ENCODE measurements at regions of chr2 and their contacts with region 1.

Region 1: GRCh38 chr2:75608684-75609333 is 37.8 kb upstream of the MRPL19 start:
- DNase-seq: peak; percentile 53 to 78
- ATAC-seq: peak; percentile 79 to 92
- H3K4me3 ChIP-seq: peak overlapping the region; percentile 36
- H3K27ac ChIP-seq: peak overlapping the region; percentile 49 to 76; a peak in 4 of 6 replicates
- H3K4me1 ChIP-seq: peaks cover 37% of the 10 kb centered on the region
- CTCF ChIP-seq: peak; percentile 98
- EP300 ChIP-seq: no peak
- POLR2A ChIP-seq: no peak
- RAD21 ChIP-seq: peak; percentile 87 to 97

Region 2: GRCh38 chr2:74919827-74920226 is 689.0 kb before region 1 on chr2:
- CTCF ChIA-PET with region 1: interaction called, 11 read pairs
- POLR2A ChIA-PET with region 1: interaction called, 4 read pairs
- DNase-seq: peak; percentile 69 to 82
- ATAC-seq: peak; percentile 73 to 88
- H3K4me3 ChIP-seq: peak overlapping the region; percentile 53
- H3K27ac ChIP-seq: peak overlapping the region; percentile 12 to 66; a peak in 3 of 6 replicates
- H3K4me1 ChIP-seq: peaks cover 6% of the 10 kb centered on the region
- CTCF ChIP-seq: peak; percentile 98
- EP300 ChIP-seq: no peak
- POLR2A ChIP-seq: no peak
- RAD21 ChIP-seq: peak; percentile 96 to 99

Region 3: DNA sequence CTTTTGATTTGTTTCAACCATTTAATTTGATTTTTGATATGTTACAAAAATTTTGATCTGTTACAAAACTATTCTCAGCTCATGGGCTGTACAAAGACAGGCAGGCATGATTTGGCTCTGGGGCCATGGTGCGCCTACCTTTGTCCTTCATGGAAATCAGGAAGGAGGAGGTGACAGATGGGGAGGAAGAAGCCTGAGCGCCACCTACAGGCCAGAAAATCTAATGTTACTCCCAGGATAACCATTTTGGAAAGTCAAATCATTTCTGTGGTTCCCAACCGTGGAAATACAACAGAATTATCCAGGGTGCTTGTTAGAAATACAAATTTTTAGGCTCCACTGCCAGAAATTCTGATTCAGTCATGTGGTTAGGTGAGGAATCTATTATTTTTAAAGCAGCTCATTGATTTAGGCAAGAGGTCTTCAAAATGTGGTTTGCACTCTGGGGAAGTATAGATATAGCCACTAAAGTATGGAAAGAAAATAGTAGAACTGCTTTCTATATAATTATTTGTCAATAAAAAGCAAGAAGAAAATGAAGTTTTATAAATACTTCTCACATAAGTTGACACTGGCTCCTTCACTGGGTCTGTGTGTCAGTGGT is 142.0 kb before region 1 on chr2:
- CTCF ChIA-PET with region 1: interaction called, 139 read pairs
- POLR2A ChIA-PET with region 1: no interaction called
- DNase-seq: peak; percentile 50 to 58
- ATAC-seq: peak; percentile 44 to 84; a peak in 3 of 6 replicates
- H3K4me3 ChIP-seq: no peak overlapping the region
- H3K27ac ChIP-seq: no peak overlapping the region
- H3K4me1 ChIP-seq: no peaks in the 10 kb centered on the region
- CTCF ChIP-seq: peak; percentile 60
- EP300 ChIP-seq: no peak
- POLR2A ChIP-seq: no peak
- RAD21 ChIP-seq: peak; percentile 51 to 70; a peak in 4 of 5 replicates

Region 4: DNA sequence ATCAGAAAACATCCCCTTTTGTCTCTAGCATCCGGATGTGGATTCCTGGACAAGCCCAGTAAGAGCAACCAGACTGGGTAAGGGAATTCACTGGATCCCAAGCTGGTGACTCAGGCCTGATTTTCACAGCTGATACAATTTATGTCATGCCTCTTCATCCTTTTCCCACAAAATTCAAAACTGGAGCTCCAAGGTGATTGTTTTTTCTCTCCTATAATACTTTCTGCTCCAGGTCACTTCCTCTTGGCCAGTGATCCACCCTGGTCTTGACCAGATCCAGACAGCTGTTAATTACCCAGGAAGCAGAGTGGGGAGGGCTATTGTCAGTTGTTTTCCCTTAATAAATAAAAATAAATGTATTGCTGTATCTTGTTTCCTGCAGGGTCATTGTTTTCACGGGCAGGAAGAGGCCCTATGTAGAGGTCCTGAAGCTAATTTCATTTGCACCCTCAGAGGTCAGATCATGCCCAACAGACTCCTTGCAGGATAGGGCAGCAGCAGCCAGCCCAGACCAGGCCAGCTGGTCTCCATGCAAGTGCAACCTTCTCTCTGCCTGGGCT is 105.7 kb before region 1 on chr2:
- CTCF ChIA-PET with region 1: interaction called, 13 read pairs
- POLR2A ChIA-PET with region 1: no interaction called
- DNase-seq: peak in 1 of 2 experiments; percentile 12
- ATAC-seq: no peak
- H3K4me3 ChIP-seq: no peak overlapping the region
- H3K27ac ChIP-seq: no peak overlapping the region
- H3K4me1 ChIP-seq: no peaks in the 10 kb centered on the region
- CTCF ChIP-seq: no peak
- EP300 ChIP-seq: no peak
- POLR2A ChIP-seq: no peak
- RAD21 ChIP-seq: no peak

Region 5: GRCh38 chr2:75560768-75561565 is 47.8 kb before region 1 on chr2 and contains the start of gene EVA1A:
- CTCF ChIA-PET with region 1: interaction called, 31 read pairs
- POLR2A ChIA-PET with region 1: interaction called, 7 read pairs
- DNase-seq: peak; percentile 16 to 33
- ATAC-seq: peak; percentile 69 to 76
- H3K4me3 ChIP-seq: peak within 1 kb of the TSS; percentile 70
- H3K27ac ChIP-seq: peak within 1 kb of the TSS; percentile 72 to 88
- H3K4me1 ChIP-seq: peaks cover 21% of the 10 kb centered on the region; the same call in 1 of the 3 replicates
- CTCF ChIP-seq: no peak; the same call in 2 of the 3 replicates
- EP300 ChIP-seq: no peak
- POLR2A ChIP-seq: no peak
- RAD21 ChIP-seq: no peak
- polyA plus RNA-seq, gene EVA1A: 2.5 TPM in 2 replicates

Region 6: GRCh38 chr2:75592028-75592427 is 16.8 kb before region 1 on chr2:
- CTCF ChIA-PET with region 1: interaction called, 23 read pairs
- POLR2A ChIA-PET with region 1: interaction called, 3 read pairs
- DNase-seq: no peak
- ATAC-seq: no peak
- H3K4me3 ChIP-seq: no peak overlapping the region
- H3K27ac ChIP-seq: peak overlapping the region in 1 of 2 experiments; percentile 46; a peak in 3 of 6 replicates
- H3K4me1 ChIP-seq: peaks cover 32% of the 10 kb centered on the region
- CTCF ChIP-seq: no peak
- EP300 ChIP-seq: no peak
- POLR2A ChIP-seq: no peak
- RAD21 ChIP-seq: no peak

Region 7: DNA sequence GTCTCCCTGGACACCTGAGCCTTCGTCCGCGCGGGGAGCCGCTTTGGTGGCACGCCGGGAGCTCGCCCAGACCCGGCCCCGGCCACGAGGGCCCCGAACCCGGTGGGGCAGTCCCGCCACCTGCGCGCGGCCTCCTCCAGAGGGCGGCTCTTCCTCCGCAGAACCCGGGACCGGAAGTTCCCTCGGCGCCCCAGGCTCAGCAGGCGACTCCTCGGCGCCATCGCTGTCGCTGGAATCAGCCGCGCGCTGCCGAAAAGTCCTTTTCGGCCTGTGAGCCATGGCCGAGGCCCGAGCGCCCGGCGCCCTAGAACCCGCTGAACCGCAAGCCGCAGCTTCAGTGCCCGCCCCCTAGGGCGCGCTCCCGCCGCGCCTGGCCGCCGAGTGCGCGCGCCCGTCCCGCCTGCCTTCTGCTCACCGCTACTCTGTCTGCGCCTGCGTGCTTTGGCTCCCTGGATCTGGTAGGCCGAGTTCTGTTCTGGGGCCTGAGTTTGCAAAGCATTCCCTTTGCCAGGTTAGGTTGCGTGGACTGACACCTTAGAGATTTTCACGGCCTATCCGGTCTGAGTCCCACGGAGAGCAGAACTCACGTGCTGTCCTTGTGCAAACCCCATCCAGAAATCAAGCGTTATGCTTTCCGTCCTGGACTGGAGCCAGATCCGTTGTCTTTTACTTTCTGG is 101.9 kb after region 1 on chr2 and contains the start of gene GCFC2:
- CTCF ChIA-PET with region 1: no interaction called
- POLR2A ChIA-PET with region 1: no interaction called
- DNase-seq: peak; percentile 89 to 93
- ATAC-seq: peak; percentile 97 to 98
- H3K4me3 ChIP-seq: peak within 1 kb of the TSS; percentile 60
- H3K27ac ChIP-seq: peak within 1 kb of the TSS; percentile 86 to 95
- H3K4me1 ChIP-seq: peaks cover 18% of the 10 kb centered on the region
- CTCF ChIP-seq: peak; percentile 42
- EP300 ChIP-seq: no peak
- POLR2A ChIP-seq: peak; percentile 84
- RAD21 ChIP-seq: no peak
- polyA plus RNA-seq, gene GCFC2: 40.6 and 41.7 TPM in 2 replicates

Region 8: DNA sequence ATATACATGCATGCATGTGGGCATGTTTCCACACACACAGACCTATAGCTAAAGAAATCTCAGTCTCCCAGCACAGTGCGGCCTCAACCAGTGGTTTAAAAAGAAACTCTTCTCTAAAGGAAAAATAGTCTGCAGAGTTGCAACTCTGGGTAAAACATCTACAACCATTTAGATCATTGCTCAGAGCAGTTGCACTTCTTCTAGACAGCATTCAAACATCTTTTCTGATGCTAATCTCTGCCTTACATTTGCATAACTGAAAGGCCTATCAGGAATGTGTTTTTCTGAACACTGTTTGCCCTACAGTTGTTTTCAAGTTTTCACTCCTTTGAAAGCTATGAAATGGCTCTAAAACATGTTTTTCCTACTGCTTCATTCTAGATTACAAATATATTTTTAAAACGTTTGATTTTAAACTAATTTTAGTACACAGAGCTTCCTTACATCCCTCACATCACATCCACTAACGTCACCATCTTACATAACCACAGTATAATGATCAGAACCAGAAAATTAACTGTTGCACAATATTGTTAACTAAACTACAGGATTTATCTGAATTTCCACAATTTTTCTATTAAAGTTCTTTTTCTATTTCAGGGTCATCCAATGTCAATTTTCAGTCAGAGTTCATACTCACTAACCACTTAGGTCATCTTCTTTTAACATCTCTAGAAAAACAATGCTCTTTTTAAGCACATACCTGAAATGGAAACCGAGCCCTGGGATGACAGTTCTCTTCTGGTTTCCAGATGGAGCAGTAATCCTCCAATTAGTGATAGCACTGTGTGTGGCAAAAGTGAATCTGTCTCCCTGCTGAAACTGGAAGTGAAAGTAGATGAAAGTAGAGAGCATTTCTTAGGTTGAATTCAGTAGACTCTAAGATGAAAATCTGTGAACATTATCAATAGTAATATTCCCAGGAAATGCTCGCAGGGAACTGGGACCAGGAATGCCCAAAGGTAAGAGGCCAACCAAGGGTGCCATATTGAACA is 603.5 kb after region 1 on chr2:
- CTCF ChIA-PET with region 1: no interaction called
- POLR2A ChIA-PET with region 1: no interaction called
- DNase-seq: no peak
- ATAC-seq: no peak
- H3K4me3 ChIP-seq: no peak overlapping the region
- H3K27ac ChIP-seq: no peak overlapping the region
- H3K4me1 ChIP-seq: no peaks in the 10 kb centered on the region
- CTCF ChIP-seq: no peak
- EP300 ChIP-seq: no peak
- POLR2A ChIP-seq: no peak
- RAD21 ChIP-seq: no peak

Region 9: GRCh38 chr2:76953733-76954347 is 1345.0 kb after region 1 on chr2:
- CTCF ChIA-PET with region 1: no interaction called
- POLR2A ChIA-PET with region 1: no interaction called
- DNase-seq: peak in 1 of 2 experiments; percentile 56
- ATAC-seq: peak in 1 of 2 experiments; percentile 46; a peak in 1 of 6 replicates
- H3K4me3 ChIP-seq: no peak overlapping the region
- H3K27ac ChIP-seq: no peak overlapping the region
- H3K4me1 ChIP-seq: no peaks in the 10 kb centered on the region
- CTCF ChIP-seq: peak; percentile 22; the same call in 1 of the 3 replicates
- EP300 ChIP-seq: no peak
- POLR2A ChIP-seq: no peak
- RAD21 ChIP-seq: peak; percentile 36 to 41; a peak in 3 of 5 replicates